Calu3 (cell line): ENCODE measurements at regions of chr9 and their contacts with region 1.

Region 1: DNA sequence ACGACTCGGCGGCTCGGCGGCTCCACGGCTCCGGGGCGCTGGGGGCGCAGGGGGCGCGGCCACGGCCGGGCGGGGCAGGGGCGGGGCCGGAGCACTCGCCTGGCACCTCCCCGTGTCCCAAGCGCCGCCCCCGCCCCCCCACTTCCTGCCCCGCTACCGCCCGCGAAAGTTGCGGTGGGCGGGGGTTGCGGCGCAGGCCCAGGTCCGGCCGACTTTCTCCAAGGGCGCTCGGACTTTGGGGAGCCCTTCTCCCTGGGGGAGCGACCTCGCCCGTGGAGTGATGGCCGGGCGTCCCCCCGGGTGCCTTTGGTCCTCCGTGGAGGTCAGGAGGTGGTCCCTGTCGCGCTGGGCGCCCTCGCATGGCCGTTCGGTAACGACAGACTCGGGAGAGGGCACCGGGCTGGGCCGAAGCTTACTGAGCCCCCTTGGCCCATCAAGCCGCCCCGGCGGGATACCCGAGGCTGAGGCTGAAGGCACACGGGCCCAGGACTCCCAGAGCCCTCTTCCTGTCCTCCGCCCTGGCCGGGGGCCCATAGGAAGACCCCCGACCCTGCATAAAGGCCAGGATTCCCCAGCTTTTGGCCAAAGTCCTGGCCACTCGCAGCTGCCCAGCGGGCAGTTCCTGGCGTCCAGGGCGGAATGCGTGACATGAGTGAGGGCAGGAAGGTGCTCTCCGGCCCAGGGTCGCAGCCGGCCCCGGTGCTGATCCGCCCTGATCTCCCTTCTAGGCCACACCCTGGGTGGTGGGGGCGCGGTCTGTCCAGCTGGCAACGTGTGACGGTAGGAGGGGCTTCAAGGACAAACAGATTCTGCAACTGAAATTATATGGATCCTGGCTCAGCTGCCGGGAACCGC is 883 bp upstream of the VAV2 start:
- DNase-seq: peak; percentile 76
- H3K4me3 Mint-ChIP-seq: peak overlapping the region; percentile 86
- H3K27ac Mint-ChIP-seq: no peak overlapping the region
- H3K4me1 Mint-ChIP-seq: peaks cover 9% of the 10 kb centered on the region
- H3K27me3 Mint-ChIP-seq: peaks cover 13% of the 10 kb centered on the region
- CTCF ChIP-seq: peak; percentile 24

Region 2: GRCh38 chr9:133782157-133783130 is 210.6 kb before region 1 on chr9:
- CTCF ChIA-PET with region 1: interaction called, 28 read pairs
- intact Hi-C with region 1: loop called (anchors 2 kb)
- DNase-seq: peak; percentile 74
- H3K4me3 Mint-ChIP-seq: no peak overlapping the region
- H3K27ac Mint-ChIP-seq: no peak overlapping the region
- H3K4me1 Mint-ChIP-seq: no peaks in the 10 kb centered on the region
- H3K27me3 Mint-ChIP-seq: no peaks in the 10 kb centered on the region
- CTCF ChIP-seq: peak; percentile 40

Region 3: GRCh38 chr9:133792721-133793470 is 200.1 kb before region 1 on chr9:
- CTCF ChIA-PET with region 1: no interaction called
- intact Hi-C with region 1: loop called (anchors 2 kb)
- DNase-seq: peak; percentile 68
- H3K4me3 Mint-ChIP-seq: no peak overlapping the region
- H3K27ac Mint-ChIP-seq: no peak overlapping the region
- H3K4me1 Mint-ChIP-seq: no peaks in the 10 kb centered on the region
- H3K27me3 Mint-ChIP-seq: no peaks in the 10 kb centered on the region
- CTCF ChIP-seq: peak; percentile 66

Region 4: GRCh38 chr9:133845440-133845839 is 147.6 kb before region 1 on chr9:
- CTCF ChIA-PET with region 1: no interaction called
- intact Hi-C with region 1: no loop called
- DNase-seq: no peak
- H3K4me3 Mint-ChIP-seq: no peak overlapping the region
- H3K27ac Mint-ChIP-seq: no peak overlapping the region
- H3K4me1 Mint-ChIP-seq: no peaks in the 10 kb centered on the region
- H3K27me3 Mint-ChIP-seq: no peaks in the 10 kb centered on the region
- CTCF ChIP-seq: no peak

Region 5: DNA sequence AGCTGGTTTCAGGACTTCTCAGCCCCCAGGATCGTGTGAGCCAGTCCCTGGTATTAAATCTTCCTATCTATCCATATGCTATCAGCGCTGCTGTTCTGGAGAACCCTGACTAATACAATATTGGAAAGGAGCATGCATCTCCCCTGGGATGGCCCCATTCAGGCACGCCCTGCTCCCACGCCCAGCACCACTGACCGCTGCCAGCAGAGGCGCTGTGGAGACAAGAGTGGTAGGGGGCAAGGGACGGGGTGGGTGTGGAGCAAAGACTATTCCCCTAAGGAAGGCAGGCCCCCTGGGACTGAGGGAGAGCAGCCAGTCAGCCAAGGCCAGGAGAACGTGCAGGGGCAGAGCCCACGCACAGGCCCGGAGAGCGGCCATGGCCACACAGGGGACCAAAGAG is 116.9 kb before region 1 on chr9:
- CTCF ChIA-PET with region 1: no interaction called
- intact Hi-C with region 1: loop called (anchors 10 kb)
- DNase-seq: peak; percentile 8
- H3K4me3 Mint-ChIP-seq: no peak overlapping the region
- H3K27ac Mint-ChIP-seq: no peak overlapping the region
- H3K4me1 Mint-ChIP-seq: peaks cover 26% of the 10 kb centered on the region
- H3K27me3 Mint-ChIP-seq: no peaks in the 10 kb centered on the region
- CTCF ChIP-seq: peak; percentile 14

Region 6: GRCh38 chr9:134040781-134041648 is 48.0 kb after region 1 on chr9:
- CTCF ChIA-PET with region 1: no interaction called
- intact Hi-C with region 1: no loop called
- DNase-seq: no peak
- H3K4me3 Mint-ChIP-seq: no peak overlapping the region
- H3K27ac Mint-ChIP-seq: no peak overlapping the region
- H3K4me1 Mint-ChIP-seq: no peaks in the 10 kb centered on the region
- H3K27me3 Mint-ChIP-seq: no peaks in the 10 kb centered on the region
- CTCF ChIP-seq: no peak